CD4-positive, alpha-beta memory T cell (primary cell): ENCODE measurements at regions of chr6 and their contacts with region 1.

Region 1: DNA sequence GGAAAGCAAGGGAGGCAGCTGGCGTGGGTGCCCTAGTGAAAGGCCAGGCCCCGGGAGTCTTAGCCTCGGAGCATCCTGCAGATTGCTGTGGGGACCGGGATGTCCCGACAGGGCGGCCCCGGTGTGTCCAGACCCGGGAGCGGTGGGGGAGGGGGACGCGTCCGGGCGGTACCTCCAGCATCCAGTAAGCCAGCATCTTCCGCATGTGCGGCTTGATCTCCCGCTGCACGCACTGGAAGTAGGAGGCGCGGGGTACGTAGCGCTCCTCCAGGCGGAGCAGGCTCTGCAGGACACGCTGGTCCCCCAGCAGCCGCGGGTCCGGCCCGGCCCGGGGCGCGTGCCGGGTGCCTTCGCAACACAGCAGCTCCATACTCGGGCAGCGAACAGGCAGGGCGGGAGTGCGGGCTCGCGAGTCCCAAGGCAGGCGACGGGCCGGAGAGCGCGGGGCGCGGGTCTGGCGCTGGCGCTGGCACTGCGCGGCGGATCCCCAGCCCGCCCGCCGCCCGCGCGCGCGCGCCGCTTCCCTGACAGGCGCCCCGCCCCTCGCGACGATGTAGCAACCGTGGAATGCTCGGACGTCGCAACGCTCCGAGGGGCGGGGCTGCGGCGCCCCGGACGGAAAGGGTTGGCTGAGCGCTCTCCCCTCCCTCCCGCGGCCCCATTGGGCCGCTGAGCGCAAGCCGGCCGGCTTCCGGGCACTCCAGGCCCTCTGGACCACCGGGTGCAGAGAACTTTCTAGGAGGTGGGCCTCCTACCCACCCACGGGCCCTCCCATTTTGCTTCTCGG is at the start of gene CCND3:
- DNase-seq: peak; percentile 77 to 86 (median 79)
- H3K4me3 ChIP-seq: peak within 1 kb of the TSS; percentile 75 to 76
- H3K4me3 Mint-ChIP-seq: peak within 1 kb of the TSS; percentile 83 to 99 (median 95)
- H3K27ac ChIP-seq: peak within 1 kb of the TSS; percentile 80
- H3K27ac Mint-ChIP-seq: peak within 1 kb of the TSS; percentile 91 to 96 (median 93)
- H3K4me1 ChIP-seq: peaks cover 77% of the 10 kb centered on the region
- H3K4me1 Mint-ChIP-seq: peaks cover 48 to 80% (median 61%) of the 10 kb centered on the region in 4 donors
- H3K27me3 ChIP-seq: no peaks in the 10 kb centered on the region
- H3K27me3 Mint-ChIP-seq: no peaks in the 10 kb centered on the region
- total RNA-seq, gene CCND3: 223 to 242 TPM

Region 2: GRCh38 chr6:41895300-41896233 is 45.9 kb before region 1 on chr6 and contains the start of gene USP49:
- CTCF ChIA-PET with region 1: no interaction called
- POLR2A ChIA-PET with region 1: interaction called, 11 read pairs
- intact Hi-C with region 1: loop called (anchors 5 kb)
- DNase-seq: peak; percentile 86 to 92 (median 88)
- H3K4me3 ChIP-seq: peak within 1 kb of the TSS; percentile 74 to 91
- H3K4me3 Mint-ChIP-seq: peak within 1 kb of the TSS in 2 of 8 donors; percentile 90 to 98
- H3K27ac ChIP-seq: peak within 1 kb of the TSS; percentile 77
- H3K27ac Mint-ChIP-seq: peak within 1 kb of the TSS in 6 of 7 donors; percentile 79 to 94 (median 90)
- H3K4me1 ChIP-seq: peaks cover 23% of the 10 kb centered on the region
- H3K4me1 Mint-ChIP-seq: peaks cover 9 to 12% (median 10%) of the 10 kb centered on the region in 4 donors
- H3K27me3 ChIP-seq: no peaks in the 10 kb centered on the region
- H3K27me3 Mint-ChIP-seq: no peaks in the 10 kb centered on the region
- total RNA-seq, gene USP49: 1.8 to 2.4 TPM

Region 3: GRCh38 chr6:41920921-41921711 is 20.4 kb before region 1 on chr6 and contains the starts of genes BYSL and MED20:
- CTCF ChIA-PET with region 1: interaction called, 133 read pairs
- POLR2A ChIA-PET with region 1: interaction called, 54 read pairs
- intact Hi-C with region 1: loop called (anchors 1 kb)
- DNase-seq: peak; percentile 94 to 96 (median 95)
- H3K4me3 ChIP-seq: peak within 1 kb of the TSS; percentile 75 to 99
- H3K4me3 Mint-ChIP-seq: peak within 1 kb of the TSS; percentile 99 to 100 (median 100)
- H3K27ac ChIP-seq: peak within 1 kb of the TSS; percentile 91
- H3K27ac Mint-ChIP-seq: peak within 1 kb of the TSS; percentile 98 to 100 (median 100)
- H3K4me1 ChIP-seq: peaks cover 47% of the 10 kb centered on the region
- H3K4me1 Mint-ChIP-seq: peaks cover 34 to 57% (median 47%) of the 10 kb centered on the region in 4 donors
- H3K27me3 ChIP-seq: no peaks in the 10 kb centered on the region
- H3K27me3 Mint-ChIP-seq: peaks cover 0 to 2% of the 10 kb centered on the region in 2 donors
- total RNA-seq, gene BYSL: 7.1 to 9.2 TPM
- total RNA-seq, gene MED20: 10.0 to 11.5 TPM

Region 4: GRCh38 chr6:41929924-41930323 is 11.5 kb before region 1 on chr6:
- CTCF ChIA-PET with region 1: interaction called, 133 read pairs
- POLR2A ChIA-PET with region 1: interaction called, 36 read pairs
- intact Hi-C with region 1: no loop called
- DNase-seq: no peak
- H3K4me3 ChIP-seq: no peak overlapping the region
- H3K4me3 Mint-ChIP-seq: no peak overlapping the region
- H3K27ac ChIP-seq: no peak overlapping the region
- H3K27ac Mint-ChIP-seq: peak overlapping the region in 3 of 7 donors; percentile 11 to 63 (median 35)
- H3K4me1 ChIP-seq: peaks cover 16% of the 10 kb centered on the region
- H3K4me1 Mint-ChIP-seq: peaks cover 21 to 32% (median 25%) of the 10 kb centered on the region in 4 donors
- H3K27me3 ChIP-seq: no peaks in the 10 kb centered on the region
- H3K27me3 Mint-ChIP-seq: no peaks in the 10 kb centered on the region

Region 5: DNA sequence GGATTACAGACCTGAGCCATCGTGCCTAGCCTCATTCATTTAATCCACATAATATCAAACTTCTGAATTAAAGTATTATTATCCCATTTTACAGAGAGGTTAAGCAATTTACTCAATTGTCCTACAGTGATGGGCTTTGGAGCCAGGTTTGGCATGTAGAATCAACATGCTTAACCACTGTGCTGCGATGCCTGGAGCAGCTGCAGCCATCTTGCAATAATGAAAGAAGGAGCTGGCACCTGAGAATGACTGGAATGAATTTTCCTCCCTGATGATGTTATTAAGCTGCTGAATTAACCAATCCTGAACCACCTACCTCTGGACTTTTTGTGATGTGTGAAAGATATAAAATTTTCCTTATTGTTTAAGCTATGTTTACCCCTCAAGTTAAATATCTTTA is 13.2 kb after region 1 on chr6:
- CTCF ChIA-PET with region 1: interaction called, 4 read pairs
- POLR2A ChIA-PET with region 1: interaction called, 6 read pairs
- intact Hi-C with region 1: loop called (anchors 2 kb)
- DNase-seq: no peak
- H3K4me3 ChIP-seq: no peak overlapping the region
- H3K4me3 Mint-ChIP-seq: peak overlapping the region in 1 of 8 donors; percentile 5
- H3K27ac ChIP-seq: no peak overlapping the region
- H3K27ac Mint-ChIP-seq: peak overlapping the region in 5 of 7 donors; percentile 35 to 53 (median 52)
- H3K4me1 ChIP-seq: peaks cover 56% of the 10 kb centered on the region
- H3K4me1 Mint-ChIP-seq: peaks cover 32 to 73% (median 47%) of the 10 kb centered on the region in 4 donors
- H3K27me3 ChIP-seq: no peaks in the 10 kb centered on the region
- H3K27me3 Mint-ChIP-seq: no peaks in the 10 kb centered on the region

Region 6: GRCh38 chr6:42009966-42010891 is 68.8 kb after region 1 on chr6:
- CTCF ChIA-PET with region 1: interaction called, 8 read pairs
- POLR2A ChIA-PET with region 1: interaction called, 10 read pairs
- intact Hi-C with region 1: no loop called
- DNase-seq: no peak
- H3K4me3 ChIP-seq: no peak overlapping the region
- H3K4me3 Mint-ChIP-seq: peak overlapping the region; percentile 48 to 84 (median 70)
- H3K27ac ChIP-seq: peak overlapping the region; percentile 51
- H3K27ac Mint-ChIP-seq: peak overlapping the region; percentile 73 to 93 (median 87)
- H3K4me1 ChIP-seq: peaks cover 64% of the 10 kb centered on the region
- H3K4me1 Mint-ChIP-seq: peaks cover 57 to 85% (median 69%) of the 10 kb centered on the region in 4 donors
- H3K27me3 ChIP-seq: no peaks in the 10 kb centered on the region
- H3K27me3 Mint-ChIP-seq: no peaks in the 10 kb centered on the region

Region 7: DNA sequence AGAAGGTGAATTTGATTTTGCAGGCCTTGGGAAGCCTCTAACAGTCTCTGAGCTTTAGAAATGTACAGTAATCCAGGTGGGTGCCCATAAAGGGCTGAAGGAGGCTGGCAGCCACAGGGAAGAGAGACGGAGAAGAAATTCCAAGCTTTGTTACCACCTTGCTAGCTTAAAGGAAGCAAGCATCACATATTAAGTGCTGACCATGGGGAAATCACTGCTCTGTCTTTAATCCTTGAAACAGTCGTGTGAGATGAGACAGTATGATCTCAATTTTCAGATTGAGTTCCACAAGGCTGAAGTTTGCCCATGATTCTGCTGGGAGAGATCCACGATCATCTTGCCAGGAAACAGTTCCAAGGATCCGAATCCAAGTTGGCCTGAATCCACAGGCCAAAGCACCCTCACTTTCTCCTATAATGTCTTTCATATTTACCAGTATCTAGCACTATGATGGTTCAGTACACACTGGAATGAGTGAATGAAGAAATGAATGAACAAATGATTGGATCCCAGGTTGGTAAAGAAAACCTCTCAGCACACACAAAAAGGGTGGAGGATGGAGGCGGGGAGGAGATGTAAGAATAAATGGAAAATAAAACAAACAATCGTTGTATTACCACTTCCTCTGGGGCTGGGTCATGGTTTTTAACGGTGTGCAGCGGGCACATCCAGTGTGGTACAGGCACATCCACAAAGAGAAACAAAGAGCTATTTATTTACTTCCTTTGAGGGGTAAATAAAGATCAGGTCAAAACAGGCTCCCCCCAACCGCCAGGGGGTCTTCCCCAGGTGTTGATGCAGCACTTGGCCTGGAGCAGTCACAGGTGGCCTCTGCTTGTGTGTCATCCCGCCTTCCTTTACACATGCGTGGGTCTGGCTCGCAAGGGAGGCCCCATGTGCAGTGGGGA is 80.6 kb after region 1 on chr6:
- CTCF ChIA-PET with region 1: interaction called, 4 read pairs
- POLR2A ChIA-PET with region 1: interaction called, 14 read pairs
- intact Hi-C with region 1: loop called (anchors 5 kb)
- DNase-seq: peak; percentile 73 to 93 (median 81)
- H3K4me3 ChIP-seq: peak overlapping the region in 1 of 2 donors; percentile 47
- H3K4me3 Mint-ChIP-seq: peak overlapping the region; percentile 75 to 92 (median 85)
- H3K27ac ChIP-seq: peak overlapping the region; percentile 65
- H3K27ac Mint-ChIP-seq: peak overlapping the region; percentile 91 to 98 (median 95)
- H3K4me1 ChIP-seq: peaks cover 83% of the 10 kb centered on the region
- H3K4me1 Mint-ChIP-seq: peaks cover 60 to 80% (median 66%) of the 10 kb centered on the region in 4 donors
- H3K27me3 ChIP-seq: no peaks in the 10 kb centered on the region
- H3K27me3 Mint-ChIP-seq: no peaks in the 10 kb centered on the region